A549 (cell line): ENCODE measurements at regions of chr19 and their contacts with region 1.

Region 1: DNA sequence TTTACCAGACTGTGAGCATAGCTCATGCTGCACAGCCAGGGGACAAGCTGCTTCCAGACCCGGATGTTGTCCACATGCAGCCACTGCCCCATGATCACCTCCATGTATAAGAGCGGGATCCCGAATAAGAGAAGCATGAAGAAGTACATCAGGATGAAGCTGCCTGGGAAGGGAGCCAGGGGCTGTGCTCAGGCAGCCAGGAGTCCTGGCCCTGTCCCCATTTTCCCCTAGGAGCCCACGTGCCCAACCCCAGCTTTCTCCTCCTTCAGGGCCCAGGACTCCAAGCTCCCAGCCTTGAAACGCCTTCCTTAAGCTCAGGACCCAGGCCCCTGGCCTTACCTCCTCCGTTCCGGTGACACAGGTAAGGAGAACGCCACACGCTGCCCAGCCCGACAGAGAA is 69.3 kb downstream of the SLC6A16 start:
- DNase-seq: no peak
- ATAC-seq: peak in 1 of 2 experiments; percentile 32; a peak in 2 of 6 replicates
- H3K4me3 ChIP-seq: no peak overlapping the region
- H3K27ac ChIP-seq: no peak overlapping the region
- H3K4me1 ChIP-seq: no peaks in the 10 kb centered on the region
- CTCF ChIP-seq: no peak
- EP300 ChIP-seq: no peak
- POLR2A ChIP-seq: no peak
- RAD21 ChIP-seq: no peak

Region 2: GRCh38 chr19:49272184-49272583 is 16.5 kb after region 1 on chr19:
- CTCF ChIA-PET with region 1: interaction called, 58 read pairs
- POLR2A ChIA-PET with region 1: no interaction called
- DNase-seq: peak in 1 of 2 experiments; percentile 44
- ATAC-seq: peak in 1 of 2 experiments; percentile 34; a peak in 1 of 6 replicates
- H3K4me3 ChIP-seq: no peak overlapping the region
- H3K27ac ChIP-seq: peak overlapping the region in 1 of 2 experiments; percentile 45; a peak in 1 of 6 replicates
- H3K4me1 ChIP-seq: peaks cover 4% of the 10 kb centered on the region; the same call in 2 of the 3 replicates
- CTCF ChIP-seq: no peak
- EP300 ChIP-seq: no peak
- POLR2A ChIP-seq: no peak
- RAD21 ChIP-seq: no peak